Naive thymus-derived CD4-positive, alpha-beta T cell (primary cell): ENCODE measurements at regions of chr3 and their contacts with region 1.

Region 1: GRCh38 chr3:114213627-114214541 is 23.5 kb downstream of the ZNF80 start:
- DNase-seq: peak; percentile 33 to 83 (median 71)
- ATAC-seq: peak; percentile 61
- H3K4me3 ChIP-seq: peak overlapping the region; percentile 50
- H3K4me3 Mint-ChIP-seq: no peak overlapping the region
- H3K27ac ChIP-seq: peak overlapping the region; percentile 90
- H3K27ac Mint-ChIP-seq: no peak overlapping the region
- H3K4me1 ChIP-seq: peaks cover 43 to 65% of the 10 kb centered on the region in 2 donors
- H3K4me1 Mint-ChIP-seq: peaks cover 0 to 26% (median 3%) of the 10 kb centered on the region in 7 donors
- H3K27me3 ChIP-seq: no peaks in the 10 kb centered on the region
- H3K27me3 Mint-ChIP-seq: no peaks in the 10 kb centered on the region

Region 2: GRCh38 chr3:113696658-113697499 is 517.0 kb before region 1 on chr3:
- CTCF ChIA-PET with region 1: no interaction called
- POLR2A ChIA-PET with region 1: interaction called, 4 read pairs
- intact Hi-C with region 1: loop called (anchors 2 to 5 kb)
- DNase-seq: peak; percentile 96 to 100 (median 99)
- ATAC-seq: peak; percentile 93
- H3K4me3 ChIP-seq: peak overlapping the region; percentile 82
- H3K4me3 Mint-ChIP-seq: no peak overlapping the region
- H3K27ac ChIP-seq: peak overlapping the region; percentile 99
- H3K27ac Mint-ChIP-seq: no peak overlapping the region
- H3K4me1 ChIP-seq: peaks cover 11 to 27% of the 10 kb centered on the region in 2 donors
- H3K4me1 Mint-ChIP-seq: peaks cover 23 to 36% (median 29%) of the 10 kb centered on the region in 7 donors
- H3K27me3 ChIP-seq: no peaks in the 10 kb centered on the region
- H3K27me3 Mint-ChIP-seq: no peaks in the 10 kb centered on the region

Region 3: GRCh38 chr3:114043205-114043604 is 170.7 kb before region 1 on chr3:
- CTCF ChIA-PET with region 1: no interaction called
- POLR2A ChIA-PET with region 1: no interaction called
- intact Hi-C with region 1: no loop called
- DNase-seq: no peak
- ATAC-seq: no peak
- H3K4me3 ChIP-seq: no peak overlapping the region
- H3K4me3 Mint-ChIP-seq: no peak overlapping the region
- H3K27ac ChIP-seq: no peak overlapping the region
- H3K27ac Mint-ChIP-seq: no peak overlapping the region
- H3K4me1 ChIP-seq: no peaks in the 10 kb centered on the region
- H3K4me1 Mint-ChIP-seq: no peaks in the 10 kb centered on the region
- H3K27me3 ChIP-seq: no peaks in the 10 kb centered on the region
- H3K27me3 Mint-ChIP-seq: peaks cover 0 to 7% (median 0%) of the 10 kb centered on the region in 5 donors

Region 4: GRCh38 chr3:114179575-114179974 is 34.3 kb before region 1 on chr3:
- CTCF ChIA-PET with region 1: no interaction called
- POLR2A ChIA-PET with region 1: interaction called, 4 read pairs
- intact Hi-C with region 1: loop called (anchors 2 to 5 kb)
- DNase-seq: peak in 1 of 9 donors; percentile 3
- ATAC-seq: peak; percentile 44
- H3K4me3 ChIP-seq: no peak overlapping the region
- H3K4me3 Mint-ChIP-seq: no peak overlapping the region
- H3K27ac ChIP-seq: no peak overlapping the region
- H3K27ac Mint-ChIP-seq: no peak overlapping the region
- H3K4me1 ChIP-seq: no peaks in the 10 kb centered on the region
- H3K4me1 Mint-ChIP-seq: peaks cover 0 to 5% (median 0%) of the 10 kb centered on the region in 7 donors
- H3K27me3 ChIP-seq: no peaks in the 10 kb centered on the region
- H3K27me3 Mint-ChIP-seq: peaks cover 5 to 33% (median 11%) of the 10 kb centered on the region in 5 donors

Region 5: GRCh38 chr3:114290911-114291901 is 77.3 kb after region 1 on chr3:
- CTCF ChIA-PET with region 1: interaction called, 13 read pairs
- POLR2A ChIA-PET with region 1: interaction called, 13 read pairs
- intact Hi-C with region 1: loop called (anchors 1 to 2 kb)
- DNase-seq: peak; percentile 61 to 85 (median 77)
- ATAC-seq: peak; percentile 88
- H3K4me3 ChIP-seq: peak overlapping the region; percentile 37
- H3K4me3 Mint-ChIP-seq: peak overlapping the region in 6 of 10 donors; percentile 7 to 66 (median 52)
- H3K27ac ChIP-seq: peak overlapping the region; percentile 51
- H3K27ac Mint-ChIP-seq: peak overlapping the region in 7 of 9 donors; percentile 27 to 80 (median 59)
- H3K4me1 ChIP-seq: peaks cover 4 to 42% of the 10 kb centered on the region in 2 donors
- H3K4me1 Mint-ChIP-seq: peaks cover 0 to 18% (median 5%) of the 10 kb centered on the region in 7 donors
- H3K27me3 ChIP-seq: no peaks in the 10 kb centered on the region
- H3K27me3 Mint-ChIP-seq: no peaks in the 10 kb centered on the region

Region 6: DNA sequence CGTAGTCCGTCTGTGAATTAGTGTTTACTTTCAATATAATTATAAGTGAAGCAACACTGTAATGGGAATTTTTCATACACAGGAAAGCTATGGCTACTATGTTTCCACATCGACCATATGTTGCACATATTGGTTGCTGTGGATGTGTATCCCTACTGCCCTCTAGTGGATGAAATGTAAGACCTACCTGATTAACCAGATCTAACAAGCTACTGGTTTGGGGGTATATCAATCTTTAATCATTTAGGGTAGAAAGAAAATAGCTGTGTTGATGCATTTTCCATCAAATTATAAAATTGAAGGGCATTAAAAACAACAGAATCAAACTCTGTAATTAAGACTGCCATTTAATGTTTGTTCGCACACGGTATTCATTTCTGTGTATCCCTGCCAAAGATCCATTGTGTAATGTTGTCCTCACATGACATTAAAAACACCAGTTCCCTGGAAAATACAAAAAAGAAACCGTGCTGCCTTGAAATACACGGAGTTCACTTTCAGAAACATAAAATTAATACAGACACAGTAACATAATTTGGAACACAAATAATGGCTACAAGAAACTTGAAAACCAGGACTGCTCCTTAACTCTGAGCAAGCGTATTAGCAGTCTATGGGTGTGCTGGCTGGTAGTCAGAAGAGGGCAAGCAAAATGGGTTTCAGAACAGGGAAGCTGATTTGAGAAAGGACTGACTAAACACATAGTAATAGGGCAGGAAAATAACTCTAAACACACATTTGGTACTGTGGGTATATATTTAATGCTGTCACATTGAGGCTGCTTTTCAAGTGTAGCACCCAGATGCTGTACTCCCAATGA is 205.1 kb after region 1 on chr3:
- CTCF ChIA-PET with region 1: interaction called, 3 read pairs
- POLR2A ChIA-PET with region 1: no interaction called
- intact Hi-C with region 1: loop called in 1 of 2 experiments (anchors 1 kb)
- DNase-seq: peak in 7 of 9 donors; percentile 40 to 66 (median 57)
- ATAC-seq: peak; percentile 91
- H3K4me3 ChIP-seq: no peak overlapping the region
- H3K4me3 Mint-ChIP-seq: no peak overlapping the region
- H3K27ac ChIP-seq: no peak overlapping the region
- H3K27ac Mint-ChIP-seq: peak overlapping the region in 2 of 9 donors; percentile 26 to 60
- H3K4me1 ChIP-seq: no peaks in the 10 kb centered on the region
- H3K4me1 Mint-ChIP-seq: peaks cover 4 to 18% (median 8%) of the 10 kb centered on the region in 7 donors
- H3K27me3 ChIP-seq: no peaks in the 10 kb centered on the region
- H3K27me3 Mint-ChIP-seq: peaks cover 0 to 2% (median 0%) of the 10 kb centered on the region in 5 donors

Region 7: GRCh38 chr3:115819785-115820384 is 1606.0 kb after region 1 on chr3:
- CTCF ChIA-PET with region 1: no interaction called
- POLR2A ChIA-PET with region 1: no interaction called
- intact Hi-C with region 1: loop called in 1 of 2 experiments (anchors 10 kb)
- DNase-seq: peak in 8 of 9 donors; percentile 26 to 67 (median 62)
- ATAC-seq: peak; percentile 97
- H3K4me3 ChIP-seq: no peak overlapping the region
- H3K4me3 Mint-ChIP-seq: no peak overlapping the region
- H3K27ac ChIP-seq: no peak overlapping the region
- H3K27ac Mint-ChIP-seq: no peak overlapping the region
- H3K4me1 ChIP-seq: no peaks in the 10 kb centered on the region
- H3K4me1 Mint-ChIP-seq: peaks cover 0 to 2% (median 0%) of the 10 kb centered on the region in 7 donors
- H3K27me3 ChIP-seq: no peaks in the 10 kb centered on the region
- H3K27me3 Mint-ChIP-seq: peaks cover 0 to 9% (median 0%) of the 10 kb centered on the region in 5 donors